ENCODE measurements at regions of chr5 and their contacts with region 1.

Region 1: GRCh38 chr5:59799668-59800346 is 93.7 kb downstream of the PDE4D start:
- DNase-seq: no peak
- ATAC-seq: peak; percentile 64 to 81
- H3K4me3 ChIP-seq: no peak overlapping the region
- H3K27ac ChIP-seq: peak overlapping the region in 1 of 4 donors; percentile 18
- H3K4me1 ChIP-seq: peaks cover 7 to 11% of the 10 kb centered on the region in 2 donors
- H3K27me3 ChIP-seq: no peaks in the 10 kb centered on the region
- CTCF ChIP-seq: peak; percentile 65 to 82 (median 72)
- POLR2A ChIP-seq: no peak

Region 2: DNA sequence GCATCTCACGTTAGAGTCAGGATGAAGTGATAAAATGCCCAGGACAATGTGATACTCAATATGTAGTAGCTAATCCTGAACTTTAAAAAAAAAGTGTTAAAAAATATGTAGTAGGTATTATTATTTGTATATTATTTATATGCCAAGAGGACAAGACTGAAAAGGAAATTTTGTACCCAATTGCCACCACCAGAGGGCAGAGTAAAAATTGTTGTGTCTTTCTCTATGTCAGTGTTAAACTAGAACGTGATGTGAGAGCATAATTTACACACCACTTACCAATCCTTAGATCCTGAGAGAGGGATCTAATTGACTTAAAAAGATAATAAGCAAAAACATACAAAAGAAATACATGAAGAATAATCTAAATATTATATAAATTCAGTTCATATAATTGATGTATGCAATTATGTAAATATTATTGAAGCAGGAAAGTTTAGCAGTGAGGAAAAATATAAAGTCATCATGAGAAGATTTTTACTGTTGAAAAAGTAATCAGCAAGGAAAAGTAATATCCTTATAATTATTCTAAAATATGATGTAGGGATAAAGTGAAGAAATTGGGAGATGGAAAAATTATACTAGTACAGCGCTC is 928.1 kb before region 1 on chr5:
- in situ Hi-C with region 1: loop called in 2 of 4 experiments (anchors 25 kb)
- intact Hi-C with region 1: loop called (anchors 5 kb)
- DNase-seq: no peak
- ATAC-seq: no peak
- H3K4me3 ChIP-seq: no peak overlapping the region
- H3K27ac ChIP-seq: no peak overlapping the region
- H3K4me1 ChIP-seq: no peaks in the 10 kb centered on the region
- H3K27me3 ChIP-seq: no peaks in the 10 kb centered on the region
- CTCF ChIP-seq: peak; percentile 26 to 61 (median 44)
- POLR2A ChIP-seq: no peak

Region 3: DNA sequence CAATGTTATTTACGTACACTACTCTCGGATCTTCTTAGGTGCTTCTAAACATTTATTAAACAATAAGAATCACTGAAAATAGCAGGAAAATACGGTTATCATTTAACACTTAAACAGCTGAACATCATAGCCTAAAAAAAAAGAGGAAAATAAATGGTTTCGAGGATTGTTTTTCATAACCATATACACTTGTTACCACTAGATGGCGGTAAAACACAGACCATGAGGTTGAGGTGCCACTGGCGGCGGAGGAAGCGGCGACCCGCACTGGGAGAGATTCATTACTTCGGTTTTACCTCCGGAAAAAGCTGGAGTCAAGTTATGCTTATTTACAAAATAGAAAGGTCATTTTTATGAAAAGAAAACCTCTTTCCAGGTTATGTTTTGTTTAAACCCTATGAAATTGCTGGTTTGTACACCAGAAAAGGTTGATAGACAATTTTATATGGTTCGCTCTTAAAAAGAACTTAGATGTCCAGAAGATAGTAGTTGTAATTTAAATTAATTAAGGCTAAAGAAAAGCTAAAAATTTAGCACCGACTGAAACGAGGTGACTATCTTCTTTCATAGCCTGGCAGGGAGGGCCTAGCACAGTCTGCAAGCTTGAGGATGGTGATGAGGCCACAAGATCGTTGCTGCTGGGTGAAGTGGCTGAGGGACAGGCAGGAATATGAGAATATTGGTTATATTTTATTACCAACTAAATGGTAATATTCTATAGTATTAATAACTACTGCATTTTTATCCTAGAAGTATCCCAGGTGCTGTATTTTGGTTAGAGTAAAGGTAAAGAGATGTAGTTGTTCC is 611.2 kb before region 1 on chr5:
- in situ Hi-C with region 1: no loop called
- intact Hi-C with region 1: loop called (anchors 10 kb)
- DNase-seq: peak; percentile 55 to 69
- ATAC-seq: peak; percentile 40 to 53
- H3K4me3 ChIP-seq: peak overlapping the region; percentile 40 to 46 (median 40)
- H3K27ac ChIP-seq: peak overlapping the region; percentile 53 to 70 (median 60)
- H3K4me1 ChIP-seq: peaks cover 41 to 64% of the 10 kb centered on the region in 2 donors
- H3K27me3 ChIP-seq: no peaks in the 10 kb centered on the region
- CTCF ChIP-seq: peak; percentile 81 to 87 (median 83)
- POLR2A ChIP-seq: no peak

Region 4: DNA sequence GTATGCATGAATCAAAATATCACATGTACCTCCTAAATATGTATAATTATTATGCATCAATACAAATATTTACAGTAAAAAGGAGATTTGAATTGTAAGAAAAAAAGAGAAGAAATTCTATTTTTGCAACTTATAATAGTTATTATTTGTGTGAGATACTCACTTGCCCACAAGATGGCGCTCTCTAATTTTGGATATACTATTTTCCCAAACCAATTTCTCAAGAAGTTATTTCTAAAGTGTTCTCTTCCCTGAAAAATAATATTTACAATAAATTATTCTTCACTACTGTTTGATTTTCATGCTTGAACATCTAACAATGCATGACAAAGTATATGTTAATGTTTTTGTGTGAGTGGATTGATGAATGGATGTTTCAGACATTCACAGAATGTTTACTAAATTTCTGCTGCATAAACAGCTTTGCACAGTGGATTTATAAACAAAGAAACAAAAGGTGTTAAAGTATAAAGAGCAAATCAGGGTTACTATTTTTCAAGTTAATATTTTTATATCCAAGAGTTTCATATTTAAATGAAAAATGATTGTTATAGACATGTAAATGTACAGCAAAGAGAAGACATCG is 409.6 kb before region 1 on chr5:
- in situ Hi-C with region 1: loop called in 3 of 4 experiments (anchors 5 to 10 kb)
- intact Hi-C with region 1: no loop called
- DNase-seq: no peak
- ATAC-seq: no peak
- H3K4me3 ChIP-seq: no peak overlapping the region
- H3K27ac ChIP-seq: peak overlapping the region in 2 of 4 donors; percentile 33 to 43
- H3K4me1 ChIP-seq: peaks cover 6 to 20% of the 10 kb centered on the region in 2 donors
- H3K27me3 ChIP-seq: no peaks in the 10 kb centered on the region
- CTCF ChIP-seq: peak; percentile 51 to 74 (median 70)
- POLR2A ChIP-seq: no peak

Region 5: DNA sequence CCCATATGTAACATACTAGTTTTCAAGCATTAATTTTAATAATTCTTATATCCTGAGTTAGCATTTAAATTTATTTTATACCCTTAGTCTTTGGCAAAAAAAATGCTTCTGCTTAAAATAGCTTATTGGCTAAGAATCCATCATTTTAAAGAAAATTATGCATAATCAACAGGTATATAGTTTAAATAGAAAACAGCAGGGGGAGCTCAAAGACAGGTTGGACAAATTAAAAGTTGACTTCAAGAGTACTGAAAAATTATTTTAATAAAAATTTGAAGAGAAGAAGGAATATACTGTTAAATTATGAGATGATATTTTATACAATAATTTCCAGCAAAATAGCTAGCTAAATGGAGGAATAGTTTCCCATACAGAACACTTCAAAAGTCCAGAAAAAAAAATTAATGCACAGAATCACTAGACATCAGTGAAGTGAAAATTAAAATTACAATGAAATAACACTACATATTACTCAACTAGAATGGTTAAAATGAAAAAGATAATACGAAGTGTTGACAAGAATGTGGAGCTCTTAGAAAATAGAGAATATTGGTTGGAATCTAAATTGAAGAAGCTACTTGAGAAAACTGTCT is 293.4 kb before region 1 on chr5:
- in situ Hi-C with region 1: loop called in 1 of 4 experiments (anchors 10 kb)
- intact Hi-C with region 1: no loop called
- DNase-seq: no peak
- ATAC-seq: no peak
- H3K4me3 ChIP-seq: no peak overlapping the region
- H3K27ac ChIP-seq: peak overlapping the region in 3 of 4 donors; percentile 12 to 60 (median 57)
- H3K4me1 ChIP-seq: peaks cover 31 to 39% of the 10 kb centered on the region in 2 donors
- H3K27me3 ChIP-seq: no peaks in the 10 kb centered on the region
- CTCF ChIP-seq: peak; percentile 28 to 60 (median 50)
- POLR2A ChIP-seq: no peak

Region 6: GRCh38 chr5:59673438-59674058 is 126.3 kb before region 1 on chr5:
- in situ Hi-C with region 1: no loop called
- intact Hi-C with region 1: loop called (anchors 10 kb)
- DNase-seq: no peak
- ATAC-seq: peak; percentile 43 to 60
- H3K4me3 ChIP-seq: no peak overlapping the region
- H3K27ac ChIP-seq: no peak overlapping the region
- H3K4me1 ChIP-seq: peaks cover 6% of the 10 kb centered on the region in 2 donors
- H3K27me3 ChIP-seq: no peaks in the 10 kb centered on the region
- CTCF ChIP-seq: peak; percentile 73 to 82 (median 77)
- POLR2A ChIP-seq: no peak

Region 7: DNA sequence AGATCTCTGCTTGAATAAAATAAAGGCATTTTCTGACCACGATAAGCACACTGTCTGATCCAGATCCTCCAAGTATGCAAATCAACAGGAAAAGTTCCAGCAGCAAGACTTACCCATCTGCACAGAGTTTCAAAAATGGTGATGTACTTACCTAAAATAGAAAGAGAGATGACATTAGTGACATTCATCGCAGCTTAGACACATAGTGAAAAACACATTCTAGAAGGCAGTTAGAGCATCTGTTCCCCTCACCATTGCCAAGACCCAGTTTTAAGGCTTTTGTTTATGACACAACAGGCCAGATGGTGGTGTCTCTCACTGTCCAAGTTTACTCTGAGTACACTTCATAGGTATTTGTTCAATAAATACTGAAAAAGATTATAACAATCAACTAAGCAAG is 114.0 kb before region 1 on chr5:
- in situ Hi-C with region 1: loop called in 1 of 4 experiments (anchors 10 kb)
- intact Hi-C with region 1: no loop called
- DNase-seq: no peak
- ATAC-seq: peak; percentile 41 to 69
- H3K4me3 ChIP-seq: no peak overlapping the region
- H3K27ac ChIP-seq: no peak overlapping the region
- H3K4me1 ChIP-seq: peaks cover 12 to 14% of the 10 kb centered on the region in 2 donors
- H3K27me3 ChIP-seq: no peaks in the 10 kb centered on the region
- CTCF ChIP-seq: no peak
- POLR2A ChIP-seq: no peak

Region 8: DNA sequence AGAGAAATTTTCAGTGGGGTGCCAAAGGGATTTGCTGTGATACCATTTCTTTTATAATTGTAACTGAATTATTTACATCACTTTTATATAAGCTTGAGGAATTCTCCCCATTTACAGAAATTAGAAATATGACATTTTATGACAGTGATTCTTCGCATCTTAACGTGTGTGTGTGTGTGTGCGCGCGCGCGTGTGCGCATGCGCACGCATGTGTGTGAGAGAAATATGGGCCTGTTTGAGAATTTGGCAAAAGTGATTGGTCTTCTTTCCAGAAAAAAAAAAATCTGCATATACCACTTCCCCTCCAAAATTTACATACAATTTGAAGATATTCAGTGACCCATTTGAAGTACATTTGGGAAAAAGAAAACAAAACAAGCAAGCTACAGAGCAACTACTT is 284.4 kb after region 1 on chr5:
- in situ Hi-C with region 1: no loop called
- intact Hi-C with region 1: no loop called
- DNase-seq: no peak
- ATAC-seq: no peak
- H3K4me3 ChIP-seq: no peak overlapping the region
- H3K27ac ChIP-seq: no peak overlapping the region
- H3K4me1 ChIP-seq: no peaks in the 10 kb centered on the region
- H3K27me3 ChIP-seq: no peaks in the 10 kb centered on the region
- CTCF ChIP-seq: no peak
- POLR2A ChIP-seq: no peak

Measured in gastrocnemius medialis (tissue), 4 donors.